Endothelial cell of umbilical vein (primary cell): ENCODE measurements at regions of chr2 and their contacts with region 1.

Region 1: DNA sequence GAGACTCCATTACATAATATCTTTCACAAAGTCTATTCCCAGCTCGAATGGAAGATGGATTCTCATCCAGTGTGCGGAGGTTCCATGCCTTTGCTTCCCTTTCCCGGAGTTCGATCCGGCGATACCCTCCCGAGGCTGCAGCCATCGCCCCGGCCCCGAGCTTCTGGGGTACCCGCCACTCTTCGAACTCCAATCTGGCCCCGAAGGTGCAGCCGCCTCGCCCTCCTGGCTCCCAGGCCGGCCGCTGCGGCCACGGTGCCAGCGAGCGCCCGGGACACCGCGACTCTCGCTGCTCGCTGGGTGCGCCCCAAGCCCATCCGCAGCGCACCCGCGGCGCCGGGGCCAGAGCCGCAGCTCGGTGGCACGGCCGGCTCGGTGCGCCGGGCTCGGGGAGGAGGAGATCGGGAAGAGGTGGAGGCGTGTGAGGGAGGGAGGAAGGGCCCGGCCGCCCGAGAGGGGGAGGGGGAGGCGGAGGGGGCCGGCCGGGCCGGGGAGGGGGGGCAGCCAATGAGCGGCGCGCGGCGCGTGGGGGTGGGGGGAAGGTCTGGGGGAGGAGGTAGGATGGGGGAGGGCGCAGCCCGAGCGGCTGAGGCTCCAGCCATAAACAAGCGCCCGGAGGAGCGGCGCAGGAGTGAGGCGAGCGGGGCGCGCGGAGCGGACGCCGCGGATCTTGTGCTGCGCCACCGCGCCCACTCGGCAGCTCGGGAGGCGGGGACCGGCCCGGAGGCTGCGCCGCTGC is at the start of gene CRIM1:
- DNase-seq: peak; percentile 88
- H3K4me3 ChIP-seq: peak within 1 kb of the TSS; percentile 85 to 98 (median 87)
- H3K27ac ChIP-seq: peak within 1 kb of the TSS; percentile 75
- H3K4me1 ChIP-seq: peaks cover 42% of the 10 kb centered on the region
- H3K27me3 ChIP-seq: no peaks in the 10 kb centered on the region
- CTCF ChIP-seq: no peak
- POLR2A ChIP-seq: peak; percentile 98
- total RNA-seq, gene CRIM1: 649 and 675 TPM in 2 replicates

Region 2: DNA sequence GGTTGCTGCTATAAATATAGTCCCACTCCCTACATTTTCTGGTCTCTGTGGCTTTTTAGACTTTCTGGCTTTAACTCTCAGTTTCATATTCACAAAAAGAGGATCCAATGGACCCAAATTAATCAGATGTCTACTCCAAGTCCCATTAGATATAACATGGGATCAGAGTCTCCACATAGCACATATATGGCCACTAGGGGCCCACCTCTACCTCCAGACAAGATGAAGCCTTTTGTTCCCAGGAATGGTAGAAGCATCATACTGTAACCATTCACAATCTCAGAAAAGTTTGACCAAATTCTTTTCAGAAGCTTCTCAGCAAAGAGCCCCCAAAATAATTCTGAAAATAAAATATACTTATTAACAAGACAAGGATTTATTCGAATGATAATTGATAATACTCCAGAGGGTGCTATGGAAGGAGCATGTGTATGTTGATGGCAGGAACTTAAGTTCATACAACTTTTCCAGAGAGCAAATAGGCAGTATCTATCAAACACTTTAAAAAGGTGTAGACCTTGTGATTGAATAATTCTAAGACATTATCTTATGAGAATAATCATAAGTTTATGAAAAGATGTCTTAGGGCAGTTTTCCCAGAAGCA is 382.1 kb before region 1 on chr2:
- CTCF ChIA-PET with region 1: interaction called, 8 read pairs
- POLR2A ChIA-PET with region 1: no interaction called
- dilution Hi-C with region 1: no loop called
- intact Hi-C with region 1: loop called (anchors 1 kb)
- DNase-seq: peak; percentile 78
- H3K4me3 ChIP-seq: no peak overlapping the region
- H3K27ac ChIP-seq: peak overlapping the region; percentile 64
- H3K4me1 ChIP-seq: peaks cover 8% of the 10 kb centered on the region
- H3K27me3 ChIP-seq: no peaks in the 10 kb centered on the region
- CTCF ChIP-seq: peak; percentile 45 to 67
- POLR2A ChIP-seq: no peak

Region 3: DNA sequence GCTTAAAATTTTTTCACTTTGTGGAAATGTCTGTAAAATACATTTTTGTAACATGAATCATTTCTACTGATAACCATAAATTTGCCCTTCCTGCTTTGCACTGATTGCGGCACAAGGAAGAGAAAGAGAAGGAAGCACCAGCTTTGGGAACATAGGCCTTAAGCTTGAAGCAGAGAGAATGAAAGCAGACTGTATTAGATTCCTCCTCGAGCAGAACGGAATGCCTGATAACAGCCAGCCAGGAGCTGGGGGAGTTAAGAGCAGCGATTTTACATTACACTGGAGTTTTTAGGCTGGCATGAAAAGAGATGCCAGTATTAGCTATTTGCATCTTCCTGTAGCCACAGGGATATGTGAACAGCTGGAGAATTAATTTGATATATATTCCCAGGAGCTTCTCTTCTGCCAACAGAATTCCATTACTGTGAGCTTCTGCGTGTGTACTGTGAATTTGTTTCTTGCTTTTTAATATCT is 33.8 kb after region 1 on chr2:
- CTCF ChIA-PET with region 1: interaction called, 7 read pairs
- POLR2A ChIA-PET with region 1: no interaction called
- dilution Hi-C with region 1: no loop called
- intact Hi-C with region 1: loop called (anchors 2 kb)
- DNase-seq: peak; percentile 87
- H3K4me3 ChIP-seq: no peak overlapping the region
- H3K27ac ChIP-seq: peak overlapping the region; percentile 98
- H3K4me1 ChIP-seq: peaks cover 87% of the 10 kb centered on the region
- H3K27me3 ChIP-seq: no peaks in the 10 kb centered on the region
- CTCF ChIP-seq: no peak
- POLR2A ChIP-seq: no peak

Region 4: DNA sequence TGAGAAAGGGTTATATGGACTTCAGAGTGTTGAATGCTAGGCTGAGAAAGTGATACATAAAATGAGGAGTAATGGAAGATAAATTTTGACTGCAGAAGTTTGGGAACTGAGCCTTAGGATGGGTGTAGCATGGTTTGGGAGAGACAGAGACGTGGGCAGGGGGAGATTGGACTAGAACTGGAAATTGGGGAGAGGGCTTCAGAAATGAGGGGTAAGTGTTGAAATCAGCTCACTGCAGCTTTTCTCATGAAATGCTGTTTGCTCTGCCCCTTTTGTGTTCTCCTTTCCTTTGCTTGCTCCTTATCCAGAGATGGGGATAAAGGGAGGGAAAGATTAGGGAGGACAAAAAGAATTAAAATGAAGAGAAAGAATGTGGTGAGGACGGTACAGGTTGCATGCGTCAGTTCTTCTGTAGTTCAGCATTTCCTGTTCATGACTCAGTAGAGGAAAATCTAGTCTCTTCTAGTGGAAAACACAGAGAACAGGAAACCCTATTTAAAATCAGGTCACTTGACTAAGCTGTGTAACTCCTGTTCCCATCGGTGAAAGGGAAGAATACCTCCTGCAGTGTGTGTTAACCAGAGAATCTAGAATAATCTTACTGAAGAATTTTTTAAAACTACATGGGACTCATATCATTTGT is 105.8 kb after region 1 on chr2:
- CTCF ChIA-PET with region 1: interaction called, 70 read pairs
- POLR2A ChIA-PET with region 1: interaction called, 10 read pairs
- dilution Hi-C with region 1: no loop called
- intact Hi-C with region 1: loop called (anchors 1 kb)
- DNase-seq: peak; percentile 93
- H3K4me3 ChIP-seq: peak overlapping the region in 1 of 3 experiments; percentile 30
- H3K27ac ChIP-seq: peak overlapping the region; percentile 98
- H3K4me1 ChIP-seq: peaks cover 97% of the 10 kb centered on the region
- H3K27me3 ChIP-seq: no peaks in the 10 kb centered on the region
- CTCF ChIP-seq: no peak
- POLR2A ChIP-seq: peak; percentile 15

Region 5: DNA sequence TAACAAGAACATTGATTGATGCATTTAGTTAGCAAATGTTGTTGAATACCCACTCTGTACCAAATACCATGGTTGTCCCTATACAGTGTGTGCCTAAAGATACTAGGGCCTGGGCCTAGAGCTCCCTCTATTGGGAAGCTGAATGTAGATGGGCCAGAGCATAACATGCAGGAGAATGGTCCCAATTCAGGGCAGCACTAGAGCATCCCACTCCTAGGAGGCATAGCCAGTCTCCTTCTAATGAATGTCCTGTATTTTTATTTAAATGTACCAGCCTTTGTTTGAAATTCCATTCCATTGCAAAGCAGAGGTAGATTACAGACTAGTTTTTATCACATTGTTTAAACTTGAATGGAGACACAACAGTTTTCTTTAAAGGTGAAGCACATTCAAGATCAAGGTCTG is 152.1 kb after region 1 on chr2:
- CTCF ChIA-PET with region 1: interaction called, 35 read pairs
- POLR2A ChIA-PET with region 1: interaction called, 5 read pairs
- dilution Hi-C with region 1: no loop called
- intact Hi-C with region 1: loop called (anchors 1 kb)
- DNase-seq: peak; percentile 64
- H3K4me3 ChIP-seq: no peak overlapping the region
- H3K27ac ChIP-seq: no peak overlapping the region
- H3K4me1 ChIP-seq: no peaks in the 10 kb centered on the region
- H3K27me3 ChIP-seq: no peaks in the 10 kb centered on the region
- CTCF ChIP-seq: peak; percentile 68 to 75
- POLR2A ChIP-seq: no peak

Region 6: DNA sequence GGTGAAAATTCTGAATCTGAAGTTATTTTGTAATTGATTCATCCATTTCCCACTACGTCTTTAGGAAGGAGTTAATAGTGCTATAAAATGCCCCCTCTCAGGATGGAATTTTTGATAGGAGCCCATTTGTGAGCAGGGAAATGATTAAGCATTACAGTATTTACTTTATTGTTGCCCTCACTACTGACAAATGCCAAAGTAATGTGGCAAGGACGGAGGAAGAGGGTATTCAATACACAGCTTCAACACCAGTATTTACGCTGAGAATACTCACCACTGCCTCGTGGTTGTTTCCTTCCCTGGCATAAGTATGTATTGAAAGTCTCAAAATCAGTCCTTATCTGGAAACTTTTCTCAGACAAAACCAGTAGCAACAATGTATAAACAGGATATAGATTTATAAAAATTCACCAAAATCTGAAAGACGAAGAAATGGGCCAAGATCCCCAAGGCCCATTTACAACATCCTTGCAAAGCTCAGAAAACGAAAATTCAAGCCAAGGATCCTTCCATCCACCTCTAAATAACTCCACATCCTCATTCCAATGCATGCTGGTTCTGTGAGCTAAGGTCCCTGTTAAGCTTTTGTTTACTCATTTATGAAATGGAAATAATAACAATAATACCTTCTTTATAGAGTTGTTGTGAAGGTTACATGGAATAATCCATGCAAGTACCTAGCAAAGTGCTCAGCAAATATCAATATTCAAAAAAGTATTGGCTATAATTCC is 213.4 kb after region 1 on chr2:
- CTCF ChIA-PET with region 1: interaction called, 5 read pairs
- POLR2A ChIA-PET with region 1: interaction called, 4 read pairs
- dilution Hi-C with region 1: no loop called
- intact Hi-C with region 1: loop called (anchors 2 kb)
- DNase-seq: peak; percentile 95
- H3K4me3 ChIP-seq: peak overlapping the region in 1 of 3 experiments; percentile 42
- H3K27ac ChIP-seq: peak overlapping the region; percentile 98
- H3K4me1 ChIP-seq: peaks cover 91% of the 10 kb centered on the region
- H3K27me3 ChIP-seq: no peaks in the 10 kb centered on the region
- CTCF ChIP-seq: no peak
- POLR2A ChIP-seq: peak; percentile 61

Region 7: DNA sequence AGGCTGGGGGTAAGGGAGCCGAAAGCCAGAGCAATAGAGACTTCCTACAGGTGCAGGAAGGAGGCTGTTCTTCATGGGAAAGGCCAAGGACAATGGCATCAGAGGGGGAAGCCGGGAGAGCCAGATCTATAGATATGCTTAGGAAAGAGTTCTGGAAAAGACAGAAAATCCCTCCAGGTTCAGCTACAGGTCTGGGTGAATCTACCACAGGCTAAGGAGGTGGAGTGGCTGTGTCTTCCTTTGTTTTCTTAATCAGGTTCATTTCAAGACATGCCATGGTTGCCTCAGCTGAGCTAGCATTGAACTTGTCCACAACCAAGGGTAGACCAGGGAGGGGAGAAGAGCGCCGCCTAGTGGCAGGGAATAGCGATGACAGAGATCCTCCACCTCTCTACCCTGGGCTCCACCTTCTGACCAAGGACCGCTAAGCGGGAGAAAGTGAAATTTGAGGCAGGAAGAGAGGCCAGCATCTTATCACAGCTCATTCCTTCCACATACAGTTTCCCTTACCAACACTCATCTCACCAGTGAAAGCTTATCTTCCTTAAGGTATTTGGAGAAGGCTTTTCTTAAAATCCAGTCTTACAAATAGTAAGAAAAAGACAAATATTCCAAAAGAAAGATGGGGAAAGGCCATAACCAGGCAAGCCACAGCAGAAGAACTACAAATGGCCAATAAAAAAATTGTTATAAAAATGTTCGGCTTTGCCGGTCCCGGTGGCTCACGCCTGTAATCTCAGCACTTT is 415.4 kb after region 1 on chr2:
- CTCF ChIA-PET with region 1: interaction called, 5 read pairs
- POLR2A ChIA-PET with region 1: no interaction called
- dilution Hi-C with region 1: no loop called
- intact Hi-C with region 1: loop called (anchors 5 kb)
- DNase-seq: peak; percentile 49
- H3K4me3 ChIP-seq: no peak overlapping the region
- H3K27ac ChIP-seq: no peak overlapping the region
- H3K4me1 ChIP-seq: no peaks in the 10 kb centered on the region
- H3K27me3 ChIP-seq: peaks cover 1 to 6% of the 10 kb centered on the region in 2 experiments
- CTCF ChIP-seq: peak; percentile 79
- POLR2A ChIP-seq: no peak